ENCODE measurements at regions of chr1 and their contacts with region 1.

Region 1: DNA sequence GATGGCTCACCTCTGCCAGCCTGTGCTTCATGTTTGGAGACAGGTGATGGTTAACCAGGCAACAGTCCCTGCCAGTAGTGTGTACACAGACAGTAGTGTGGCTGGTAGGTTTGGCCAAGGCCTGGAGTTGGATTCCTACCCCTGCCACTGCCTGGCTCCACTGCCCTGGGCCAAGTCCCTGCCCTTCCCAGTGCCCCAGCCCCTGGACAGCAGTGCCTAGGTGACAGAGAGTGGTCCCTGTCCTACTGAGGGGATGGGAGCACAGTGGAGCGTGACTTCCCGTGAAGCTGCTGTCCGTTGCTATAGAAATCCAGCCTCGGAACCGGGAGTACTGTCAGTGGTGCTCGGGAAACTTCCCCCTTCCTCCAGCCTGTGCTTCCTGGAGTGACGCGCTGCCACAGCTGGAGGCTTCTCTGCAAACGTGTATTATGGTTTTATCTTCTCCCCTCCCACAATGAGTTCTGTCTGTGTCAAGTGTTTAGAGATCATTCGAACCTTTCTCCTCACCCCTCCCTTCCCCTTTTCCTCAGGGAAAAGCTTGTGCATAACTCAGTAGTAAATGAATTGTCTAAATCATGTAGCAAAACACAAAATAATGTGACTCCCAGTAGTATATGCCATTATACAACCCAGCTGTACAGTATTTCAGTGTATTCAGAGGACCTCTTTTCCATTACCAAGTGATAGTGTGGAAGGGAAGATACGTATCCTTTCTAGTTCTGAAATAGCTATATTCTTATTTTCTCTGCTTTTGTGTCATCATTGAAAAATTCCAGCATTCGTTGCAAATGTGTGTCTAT is 73.4 kb downstream of the GALNT2 start:
- DNase-seq: no peak
- ATAC-seq: peak; percentile 43 to 53
- H3K4me3 ChIP-seq: peak overlapping the region in 1 of 4 donors; percentile 18
- H3K27ac ChIP-seq: peak overlapping the region; percentile 40 to 64 (median 56)
- H3K4me1 ChIP-seq: peaks cover 64 to 73% of the 10 kb centered on the region in 2 donors
- H3K27me3 ChIP-seq: no peaks in the 10 kb centered on the region
- CTCF ChIP-seq: no peak
- POLR2A ChIP-seq: no peak

Region 2: GRCh38 chr1:229972600-229973296 is 167.7 kb before region 1 on chr1:
- in situ Hi-C with region 1: no loop called
- intact Hi-C with region 1: loop called (anchors 10 kb)
- DNase-seq: no peak
- ATAC-seq: no peak
- H3K4me3 ChIP-seq: no peak overlapping the region
- H3K27ac ChIP-seq: no peak overlapping the region
- H3K4me1 ChIP-seq: no peaks in the 10 kb centered on the region
- H3K27me3 ChIP-seq: no peaks in the 10 kb centered on the region
- CTCF ChIP-seq: peak in 1 of 5 experiments; percentile 23
- POLR2A ChIP-seq: no peak

Region 3: DNA sequence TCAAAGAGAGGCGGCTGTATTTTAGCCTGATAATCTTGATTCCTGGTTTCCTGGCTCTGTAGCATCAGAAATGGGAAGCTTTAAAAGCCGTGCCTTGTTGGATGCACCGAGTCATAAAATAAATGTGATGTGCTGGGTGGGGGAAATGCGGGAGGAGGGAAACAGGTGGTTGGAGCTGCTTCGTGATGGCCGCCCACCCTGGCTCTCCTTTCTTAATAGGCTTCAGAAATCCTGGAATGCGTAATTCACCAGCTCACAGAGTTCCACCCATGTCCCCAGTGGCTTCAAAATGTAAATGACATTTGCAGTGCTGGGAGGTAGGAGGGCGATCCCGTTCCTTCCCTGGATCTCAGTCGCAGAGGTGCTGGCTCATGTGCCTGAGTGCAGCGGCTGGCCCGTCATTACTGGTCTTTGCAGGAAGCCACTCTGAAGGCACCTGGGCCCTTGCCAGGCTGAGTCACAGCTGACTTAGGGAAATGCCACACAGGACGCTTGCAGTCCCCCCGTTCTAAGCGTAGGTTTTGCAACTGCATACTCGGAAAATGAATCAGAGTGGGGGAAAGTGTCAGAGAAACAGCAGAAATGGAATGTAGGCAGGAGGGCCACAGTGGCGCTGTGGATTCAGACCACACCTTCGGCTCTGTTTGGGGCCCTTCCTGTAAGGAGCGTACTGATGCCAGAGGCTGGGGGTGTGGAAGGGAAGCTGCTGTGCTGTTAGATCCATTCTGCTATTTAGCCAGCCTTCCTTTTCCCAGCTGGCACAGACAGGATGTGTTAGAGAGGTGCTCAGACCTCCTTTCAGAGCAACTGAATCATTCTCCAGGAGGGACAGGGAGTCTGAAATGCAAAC is 35.8 kb before region 1 on chr1:
- in situ Hi-C with region 1: no loop called
- intact Hi-C with region 1: loop called (anchors 1 kb)
- DNase-seq: peak; percentile 98 to 100
- ATAC-seq: peak; percentile 89 to 93
- H3K4me3 ChIP-seq: peak overlapping the region; percentile 5 to 25 (median 15)
- H3K27ac ChIP-seq: peak overlapping the region; percentile 83 to 89 (median 84)
- H3K4me1 ChIP-seq: peaks cover 54 to 57% of the 10 kb centered on the region in 2 donors
- H3K27me3 ChIP-seq: no peaks in the 10 kb centered on the region
- CTCF ChIP-seq: peak in 3 of 5 experiments; percentile 14 to 45 (median 25)
- POLR2A ChIP-seq: peak in 1 of 2 donors; percentile 33

Region 4: DNA sequence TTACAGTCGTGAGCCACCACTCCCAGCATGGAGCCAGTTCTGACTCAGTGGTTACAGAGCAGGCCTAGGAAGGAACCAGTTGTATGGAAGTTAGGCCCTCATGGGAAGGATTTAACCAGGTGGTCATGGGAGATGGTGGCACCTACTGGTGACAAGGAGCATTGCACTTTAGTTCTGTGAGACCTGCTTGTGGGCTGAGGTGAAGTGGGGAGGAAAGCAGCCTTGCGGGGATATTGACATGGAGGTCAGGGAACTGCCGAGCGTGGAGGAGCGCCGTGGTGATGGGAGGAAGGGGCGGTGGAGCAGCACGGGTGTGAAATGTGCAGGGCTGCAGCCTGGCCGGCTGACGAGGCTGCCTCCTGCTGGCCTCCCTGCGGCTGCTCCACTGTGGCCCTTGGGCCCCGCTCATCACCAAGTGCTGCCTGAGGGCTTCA is 27.0 kb after region 1 on chr1:
- in situ Hi-C with region 1: no loop called
- intact Hi-C with region 1: no loop called
- DNase-seq: no peak
- ATAC-seq: no peak
- H3K4me3 ChIP-seq: no peak overlapping the region
- H3K27ac ChIP-seq: no peak overlapping the region
- H3K4me1 ChIP-seq: peaks cover 56 to 71% of the 10 kb centered on the region in 2 donors
- H3K27me3 ChIP-seq: no peaks in the 10 kb centered on the region
- CTCF ChIP-seq: peak; percentile 45 to 79 (median 57)
- POLR2A ChIP-seq: no peak